PC-9 (cell line): ENCODE measurements at regions of chr11 and their contacts with region 1.

Region 1: DNA sequence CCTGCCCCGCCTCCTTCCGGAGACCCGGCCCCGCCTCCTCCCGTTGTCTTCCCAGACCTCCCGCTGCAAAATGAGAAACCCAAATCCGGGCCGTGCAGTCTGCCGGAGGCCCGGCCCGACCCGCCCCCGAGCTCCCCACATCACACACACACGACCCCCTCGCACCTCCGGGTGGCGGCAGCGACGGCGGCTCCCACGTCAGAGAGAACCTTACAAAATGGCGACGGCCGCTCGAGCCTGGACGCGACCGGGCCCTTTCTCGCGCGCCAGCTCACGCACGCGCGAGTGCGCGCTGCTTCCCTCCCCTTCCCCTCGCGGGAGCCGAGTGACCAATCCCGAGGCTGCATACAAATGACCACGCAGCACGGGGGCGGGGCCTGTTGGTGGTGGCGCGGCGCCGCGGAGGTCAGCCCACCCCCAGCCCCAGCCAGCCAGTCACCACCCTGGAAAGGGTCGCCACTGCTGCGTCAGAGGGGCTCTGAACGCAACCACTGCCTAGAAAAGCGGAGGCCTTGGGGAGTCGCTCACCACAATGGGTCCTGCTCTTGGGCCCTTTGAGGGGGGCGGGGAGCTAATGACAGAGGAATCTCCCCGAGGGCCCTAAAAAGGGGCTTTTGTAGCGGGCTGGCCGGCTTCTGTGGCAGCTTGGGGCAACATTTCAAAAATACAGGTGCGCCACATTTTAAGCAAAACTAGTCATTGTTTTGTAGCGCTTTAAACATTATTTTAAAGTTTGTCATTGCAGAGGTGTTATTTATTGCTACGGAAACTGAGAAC is at the start of gene RBM4B:
- DNase-seq: peak; percentile 86 to 97
- H3K4me3 ChIP-seq: peak within 1 kb of the TSS; percentile 66
- H3K27ac ChIP-seq: peak within 1 kb of the TSS; percentile 80
- H3K4me1 ChIP-seq: peaks cover 23% of the 10 kb centered on the region
- H3K27me3 ChIP-seq: no peaks in the 10 kb centered on the region
- CTCF ChIP-seq: no peak
- total RNA-seq, gene RBM4B: 17.8 and 24.8 TPM in 2 replicates

Region 2: DNA sequence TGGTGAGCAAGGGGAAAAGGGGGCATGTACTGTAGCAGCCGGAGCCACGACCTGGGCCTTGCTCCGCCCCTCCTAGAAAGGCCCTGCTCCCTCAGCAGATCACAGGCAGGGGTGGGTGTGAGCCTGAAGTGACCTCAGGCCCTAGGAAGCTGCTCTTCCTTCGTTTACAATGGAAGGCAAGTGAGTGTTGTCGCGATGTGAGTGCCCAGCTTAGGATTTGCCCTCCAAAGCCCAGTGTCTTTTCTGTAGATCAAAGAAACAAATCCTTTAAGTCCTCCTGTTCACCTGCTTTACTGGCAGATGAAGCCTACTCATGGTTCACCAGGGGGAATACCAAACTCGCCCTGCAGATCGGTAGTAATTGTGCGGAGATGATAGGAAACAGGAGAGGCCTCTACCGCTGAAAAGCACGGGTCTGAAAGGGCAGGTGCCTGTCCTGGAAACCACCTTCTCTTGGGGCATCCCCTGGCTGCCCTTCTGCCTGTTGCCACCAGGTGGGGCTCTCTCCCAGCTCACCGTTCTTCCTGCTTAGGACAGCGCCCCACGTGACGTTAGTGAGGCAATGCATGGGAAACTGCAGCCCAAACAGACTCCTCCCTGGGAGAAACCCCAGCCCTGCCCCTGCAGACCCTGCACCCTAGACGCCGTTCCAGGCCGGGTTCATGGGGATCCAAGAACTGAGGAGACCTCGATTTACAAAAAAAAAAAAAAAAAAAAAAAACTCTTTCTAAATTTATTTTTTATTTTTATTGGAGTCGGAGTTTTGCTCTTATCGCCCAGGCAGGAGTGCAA is 455.2 kb before region 1 on chr11:
- CTCF ChIA-PET with region 1: no interaction called
- POLR2A ChIA-PET with region 1: interaction called, 18 read pairs
- intact Hi-C with region 1: no loop called
- DNase-seq: peak; percentile 86 to 90
- H3K4me3 ChIP-seq: no peak overlapping the region
- H3K27ac ChIP-seq: no peak overlapping the region
- H3K4me1 ChIP-seq: no peaks in the 10 kb centered on the region; the same call in 1 of the 2 replicates
- H3K27me3 ChIP-seq: no peaks in the 10 kb centered on the region
- CTCF ChIP-seq: peak; percentile 98

Region 3: DNA sequence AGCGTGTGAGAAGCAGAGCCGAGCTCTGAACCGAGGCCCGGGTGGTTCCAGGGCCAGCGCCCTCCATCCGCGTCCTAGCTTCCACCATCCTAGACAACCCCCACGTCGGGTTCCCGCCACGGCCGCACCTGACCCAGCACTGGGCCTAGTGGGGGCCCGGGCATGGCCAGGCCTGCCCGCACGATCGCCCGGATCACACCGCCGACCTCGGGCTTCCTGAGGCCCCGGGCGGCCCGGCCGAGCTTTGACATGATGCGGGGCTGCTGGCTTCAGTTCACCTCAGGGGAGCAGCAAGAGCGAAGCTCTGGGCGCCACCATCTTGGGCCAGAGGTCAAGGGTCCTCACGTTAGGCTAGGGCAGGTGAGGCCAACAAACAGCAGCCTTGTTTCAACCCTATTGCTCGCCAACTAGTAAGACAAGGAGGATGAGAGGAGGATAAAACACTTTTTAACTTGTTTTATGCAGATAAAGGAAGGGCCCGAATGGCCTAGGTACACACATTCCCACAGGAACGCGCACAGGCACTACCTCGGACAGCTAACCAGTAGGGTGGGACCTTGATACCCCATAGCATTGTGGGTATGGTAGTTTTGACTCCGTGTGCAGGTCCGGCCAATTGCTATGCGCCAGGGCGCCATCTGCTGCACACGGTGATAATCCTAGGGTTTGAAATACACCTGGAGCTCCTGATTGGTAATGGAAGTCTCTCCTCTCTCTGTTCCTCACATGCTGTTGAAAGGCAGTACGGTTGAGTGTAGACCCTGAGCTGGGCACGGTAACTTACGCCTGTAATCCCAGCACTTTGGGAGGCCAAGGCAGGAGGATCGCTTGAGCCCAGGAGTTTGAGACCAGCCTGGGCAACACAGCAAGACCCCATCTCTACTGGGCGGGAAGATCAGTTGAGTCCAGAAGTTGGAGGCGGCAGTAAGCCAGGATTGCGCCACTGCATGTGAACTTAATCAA is 239.0 kb before region 1 on chr11 and contains the start of gene MRPL11:
- CTCF ChIA-PET with region 1: interaction called, 5 read pairs
- POLR2A ChIA-PET with region 1: no interaction called
- intact Hi-C with region 1: loop called (anchors 1 kb)
- DNase-seq: peak; percentile 91
- H3K4me3 ChIP-seq: peak within 1 kb of the TSS; percentile 71
- H3K27ac ChIP-seq: peak within 1 kb of the TSS; percentile 58
- H3K4me1 ChIP-seq: peaks cover 12% of the 10 kb centered on the region
- H3K27me3 ChIP-seq: no peaks in the 10 kb centered on the region
- CTCF ChIP-seq: peak; percentile 78
- total RNA-seq, gene MRPL11: 138 and 140 TPM in 2 replicates

Region 4: GRCh38 chr11:66480117-66480938 is 197.5 kb before region 1 on chr11 and contains the start of gene DPP3:
- CTCF ChIA-PET with region 1: interaction called, 4 read pairs
- POLR2A ChIA-PET with region 1: interaction called, 3 read pairs
- intact Hi-C with region 1: loop called (anchors 1 kb)
- DNase-seq: peak; percentile 93 to 99
- H3K4me3 ChIP-seq: peak within 1 kb of the TSS; percentile 61
- H3K27ac ChIP-seq: peak within 1 kb of the TSS; percentile 59
- H3K4me1 ChIP-seq: peaks cover 7% of the 10 kb centered on the region
- H3K27me3 ChIP-seq: no peaks in the 10 kb centered on the region
- CTCF ChIP-seq: no peak
- total RNA-seq, gene DPP3: 76.2 and 80.0 TPM in 2 replicates

Region 5: DNA sequence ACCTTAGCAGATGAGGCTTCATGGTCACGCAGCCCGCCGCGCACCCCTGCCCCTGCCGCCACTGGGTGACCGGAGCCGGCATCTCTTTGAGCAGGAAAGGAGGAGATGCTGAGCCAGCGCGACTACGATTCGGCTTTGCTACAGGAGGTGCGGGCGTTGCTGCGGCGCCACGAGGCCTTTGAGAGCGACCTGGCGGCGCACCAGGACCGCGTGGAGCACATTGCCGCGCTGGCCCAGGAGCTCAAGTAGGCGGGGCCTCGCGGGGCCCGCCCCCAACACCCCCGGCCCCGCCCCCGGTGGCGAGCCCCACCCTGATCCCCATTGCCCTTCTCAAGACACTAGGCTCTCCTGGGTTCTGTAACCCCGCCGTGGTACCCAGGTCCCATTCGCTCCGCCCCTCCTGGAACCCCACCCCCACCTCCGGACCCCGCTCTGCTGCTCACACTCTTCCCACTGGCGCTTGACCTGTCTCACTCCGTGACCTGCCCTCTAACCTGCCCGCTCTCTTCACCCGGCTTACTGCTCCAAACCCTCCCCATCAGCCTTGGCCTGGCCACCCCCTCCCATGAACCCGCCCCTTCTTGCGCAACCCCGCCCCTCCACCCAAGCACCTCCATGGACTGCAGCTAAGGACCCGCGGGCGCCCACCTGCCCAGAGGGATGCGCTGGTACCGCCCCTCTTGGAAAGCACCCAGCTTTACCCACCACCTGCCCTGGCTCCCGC is 118.5 kb before region 1 on chr11:
- CTCF ChIA-PET with region 1: interaction called, 11 read pairs
- POLR2A ChIA-PET with region 1: no interaction called
- intact Hi-C with region 1: no loop called
- DNase-seq: no peak
- H3K4me3 ChIP-seq: no peak overlapping the region
- H3K27ac ChIP-seq: no peak overlapping the region
- H3K4me1 ChIP-seq: no peaks in the 10 kb centered on the region
- H3K27me3 ChIP-seq: 0 out of 2 replicates have a peak, but pooled peaks cover 6% of the 10 kb centered on the region
- CTCF ChIP-seq: no peak

Region 6: GRCh38 chr11:66616379-66617154 is 61.2 kb before region 1 on chr11 and contains the start of gene RBM14:
- CTCF ChIA-PET with region 1: no interaction called
- POLR2A ChIA-PET with region 1: no interaction called
- intact Hi-C with region 1: loop called (anchors 1 kb)
- DNase-seq: peak; percentile 99
- H3K4me3 ChIP-seq: peak within 1 kb of the TSS; percentile 73
- H3K27ac ChIP-seq: peak within 1 kb of the TSS; percentile 73
- H3K4me1 ChIP-seq: peaks cover 41% of the 10 kb centered on the region
- H3K27me3 ChIP-seq: no peaks in the 10 kb centered on the region
- CTCF ChIP-seq: no peak
- total RNA-seq, gene RBM14: 108 and 112 TPM in 2 replicates

Region 7: DNA sequence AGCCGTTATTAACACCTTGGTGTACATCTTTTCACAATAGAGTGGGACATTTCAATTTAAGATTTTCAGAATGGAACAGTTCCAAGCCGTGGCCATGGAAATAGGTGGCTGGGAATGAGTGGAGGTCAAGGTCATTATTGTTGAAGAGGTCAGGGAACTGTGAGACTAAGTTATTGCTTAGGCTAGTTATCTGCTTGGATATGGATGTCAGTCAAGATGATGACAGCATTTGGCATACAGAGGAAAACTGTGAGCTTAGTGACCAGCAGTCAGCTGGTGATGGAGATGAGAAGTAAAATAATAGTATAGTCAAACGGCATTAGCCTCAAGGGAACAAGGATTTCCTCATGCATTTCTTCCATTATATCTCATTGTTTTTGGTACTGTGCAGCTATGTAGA is 112.9 kb after region 1 on chr11:
- CTCF ChIA-PET with region 1: no interaction called
- POLR2A ChIA-PET with region 1: no interaction called
- intact Hi-C with region 1: no loop called
- DNase-seq: no peak
- H3K4me3 ChIP-seq: no peak overlapping the region
- H3K27ac ChIP-seq: no peak overlapping the region
- H3K4me1 ChIP-seq: peaks cover 32% of the 10 kb centered on the region
- H3K27me3 ChIP-seq: no peaks in the 10 kb centered on the region
- CTCF ChIP-seq: no peak